ENCODE measurements at regions of chr5 and their contacts with region 1.

Region 1: GRCh38 chr5:14213813-14214585 is 70.9 kb downstream of the TRIO start:
- DNase-seq: no peak
- H3K4me3 ChIP-seq: no peak overlapping the region
- H3K27ac ChIP-seq: no peak overlapping the region
- H3K4me1 ChIP-seq: peaks cover 0 to 77% (median 47%) of the 10 kb centered on the region in 4 donors
- H3K27me3 ChIP-seq: no peaks in the 10 kb centered on the region
- CTCF ChIP-seq: no peak

Region 2: DNA sequence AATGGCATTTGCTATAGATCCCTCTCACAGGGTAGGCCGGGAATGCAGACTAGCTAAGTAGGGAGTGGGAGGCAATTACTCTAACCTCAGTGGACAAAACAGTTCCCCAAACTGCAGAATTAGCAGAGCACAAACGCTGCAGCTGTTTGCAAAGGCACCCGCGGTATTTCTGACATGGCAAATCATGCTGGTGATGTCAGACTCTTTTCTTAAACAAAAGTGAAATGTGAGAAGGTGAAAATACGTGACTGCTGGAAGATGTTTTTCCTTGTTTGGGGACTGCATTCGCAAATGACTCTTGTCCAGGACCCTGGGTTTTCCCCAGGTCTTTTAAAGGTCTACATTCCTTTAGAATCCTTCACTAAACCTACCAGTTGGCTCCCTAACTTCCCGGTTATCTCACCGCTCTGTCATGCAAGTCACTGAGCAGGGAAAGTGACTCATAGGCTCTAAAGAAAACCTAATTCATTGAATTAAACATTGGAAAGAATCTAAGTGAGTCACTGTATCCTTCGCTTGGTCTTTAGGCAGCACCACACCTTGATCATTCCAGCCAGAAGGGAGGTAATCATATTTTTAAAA is 178.0 kb before region 1 on chr5:
- intact Hi-C with region 1: no loop called
- DNase-seq: no peak
- H3K4me3 ChIP-seq: peak overlapping the region; percentile 13 to 42
- H3K27ac ChIP-seq: peak overlapping the region; percentile 33 to 44
- H3K4me1 ChIP-seq: peaks cover 0 to 26% (median 18%) of the 10 kb centered on the region in 4 donors
- H3K27me3 ChIP-seq: no peaks in the 10 kb centered on the region
- CTCF ChIP-seq: no peak

Region 3: GRCh38 chr5:14118527-14119320 is 95.3 kb before region 1 on chr5:
- intact Hi-C with region 1: no loop called
- DNase-seq: no peak
- H3K4me3 ChIP-seq: no peak overlapping the region
- H3K27ac ChIP-seq: no peak overlapping the region
- H3K4me1 ChIP-seq: no peaks in the 10 kb centered on the region
- H3K27me3 ChIP-seq: no peaks in the 10 kb centered on the region
- CTCF ChIP-seq: no peak

Region 4: DNA sequence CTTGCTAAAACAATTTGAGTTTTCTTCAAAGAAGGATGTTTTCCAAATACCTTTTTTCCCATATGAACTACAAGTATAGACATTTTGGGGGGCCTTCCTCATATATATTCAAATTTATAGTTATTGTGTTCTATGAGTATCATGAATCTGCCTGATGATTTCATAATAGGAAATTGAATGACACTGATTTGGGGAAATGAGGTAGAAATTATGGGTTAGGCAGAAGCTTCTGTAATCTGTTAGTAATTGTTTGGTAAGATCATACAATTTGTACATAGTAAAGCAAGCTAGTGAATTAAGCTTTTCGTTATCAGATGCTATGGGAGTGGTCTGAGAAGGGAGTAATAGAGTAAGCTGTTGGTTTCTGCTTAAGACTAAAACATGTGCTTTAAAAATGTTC is 27.1 kb after region 1 on chr5:
- intact Hi-C with region 1: loop called (anchors 1 kb)
- DNase-seq: no peak
- H3K4me3 ChIP-seq: no peak overlapping the region
- H3K27ac ChIP-seq: no peak overlapping the region
- H3K4me1 ChIP-seq: peaks cover 0 to 82% (median 20%) of the 10 kb centered on the region in 4 donors
- H3K27me3 ChIP-seq: no peaks in the 10 kb centered on the region
- CTCF ChIP-seq: no peak